ENCODE measurements at regions of chr18 and their contacts with region 1.

Region 1: DNA sequence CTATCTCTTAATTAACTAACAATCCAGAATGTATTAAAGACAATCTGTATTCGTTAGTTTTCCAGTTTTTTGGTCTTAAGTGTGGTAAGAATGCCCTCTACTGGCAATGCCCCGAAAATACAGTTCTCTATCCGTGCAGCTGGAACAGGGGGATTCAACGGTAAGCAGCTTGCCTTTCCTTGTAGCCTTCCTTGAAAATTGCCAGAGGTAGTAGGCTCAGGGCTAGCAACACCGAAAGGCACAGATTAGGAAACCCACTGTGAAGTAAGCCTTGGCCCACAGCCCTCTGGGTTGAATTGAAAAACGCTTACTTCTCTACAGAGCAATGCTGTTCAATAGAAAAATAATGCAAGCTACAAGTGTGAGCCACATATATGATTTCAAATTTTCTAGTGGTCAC is 17.1 kb upstream of the VPS4B start:
- DNase-seq: peak; percentile 76
- H3K4me3 ChIP-seq: peak overlapping the region in 1 of 2 experiments; percentile 28; a peak in 1 of 4 replicates
- H3K27ac ChIP-seq: no peak overlapping the region
- H3K4me1 ChIP-seq: 0 out of 4 replicates have a peak, but pooled peaks cover 0 to 6% of the 10 kb centered on the region in 2 experiments
- H3K27me3 ChIP-seq: no peaks in the 10 kb centered on the region
- CTCF ChIP-seq: peak; percentile 91
- EP300 ChIP-seq: no peak
- RAD21 ChIP-seq: peak; percentile 89

Region 2: DNA sequence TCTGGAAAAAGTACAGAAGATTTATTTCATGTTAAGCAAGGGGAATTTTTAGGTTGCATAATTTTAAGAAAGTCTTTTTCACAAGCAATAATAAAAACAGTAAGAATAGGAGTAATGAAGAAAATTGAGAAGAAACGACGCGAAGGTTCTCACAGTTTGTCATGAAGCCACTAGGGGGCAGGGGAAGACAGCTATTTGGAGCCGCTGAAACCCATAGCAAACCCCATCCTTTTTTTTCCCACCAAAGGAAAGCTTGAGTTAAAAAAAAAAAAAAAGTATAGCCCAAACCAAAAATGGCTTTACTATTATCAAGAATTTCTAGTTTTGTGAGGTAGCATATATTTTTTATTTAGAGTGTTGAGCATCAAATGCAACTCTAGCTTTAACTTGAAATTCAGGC is 423.1 kb before region 1 on chr18:
- CTCF ChIA-PET with region 1: interaction called, 66 read pairs
- POLR2A ChIA-PET with region 1: no interaction called
- DNase-seq: peak; percentile 82
- H3K4me3 ChIP-seq: peak overlapping the region in 1 of 2 experiments; percentile 4; a peak in 1 of 4 replicates
- H3K27ac ChIP-seq: no peak overlapping the region
- H3K4me1 ChIP-seq: no peaks in the 10 kb centered on the region
- H3K27me3 ChIP-seq: peaks cover 4% of the 10 kb centered on the region; the same call in 1 of the 2 replicates
- CTCF ChIP-seq: peak; percentile 91
- EP300 ChIP-seq: no peak
- RAD21 ChIP-seq: peak; percentile 97

Region 3: DNA sequence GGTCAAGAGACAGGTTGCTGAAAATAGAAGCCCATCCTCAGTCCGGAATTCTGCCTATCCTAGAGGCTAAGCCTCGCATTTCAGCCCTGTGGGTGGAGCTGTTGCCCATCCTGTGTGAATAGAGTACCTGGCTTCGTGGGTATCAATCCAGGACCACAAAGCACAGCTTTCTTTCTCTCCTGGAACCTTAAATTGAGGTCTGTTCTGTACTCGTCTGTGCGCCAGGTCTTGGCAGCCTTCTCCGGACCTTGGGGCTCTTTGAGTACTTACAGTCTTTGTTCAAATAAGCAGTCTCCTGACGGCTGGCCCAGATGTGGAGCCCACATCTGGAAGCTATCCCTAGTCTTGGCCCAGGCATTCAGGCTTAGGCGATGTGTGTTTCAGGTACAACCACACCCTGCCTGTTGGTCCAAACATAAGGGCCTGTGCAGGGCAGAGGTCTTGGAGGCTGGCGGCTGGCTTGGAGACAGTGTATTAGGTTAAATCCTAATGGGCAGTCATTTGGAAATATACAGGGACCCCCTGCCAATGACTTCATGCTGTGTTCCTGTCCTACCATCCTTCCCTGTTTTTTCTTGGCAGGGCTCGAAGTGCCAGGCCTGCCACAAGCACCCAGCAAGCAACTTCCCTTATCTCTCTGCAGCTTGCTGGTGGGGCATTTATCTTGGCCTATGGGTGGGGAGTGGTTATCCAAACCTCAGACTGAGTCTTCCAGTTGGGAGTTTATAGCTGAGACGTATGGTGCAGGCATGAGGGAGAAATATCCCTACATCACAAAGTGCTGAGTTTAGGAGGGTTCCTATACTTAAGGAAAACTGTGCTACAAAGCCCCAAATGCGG is 413.9 kb before region 1 on chr18:
- CTCF ChIA-PET with region 1: interaction called, 11 read pairs
- POLR2A ChIA-PET with region 1: no interaction called
- DNase-seq: peak; percentile 68
- H3K4me3 ChIP-seq: no peak overlapping the region
- H3K27ac ChIP-seq: peak overlapping the region in 1 of 2 experiments; percentile 6; a peak in 2 of 4 replicates
- H3K4me1 ChIP-seq: peaks cover 0 to 7% of the 10 kb centered on the region in 2 experiments; a peak in 1 of 4 replicates
- H3K27me3 ChIP-seq: no peaks in the 10 kb centered on the region
- CTCF ChIP-seq: peak; percentile 34
- EP300 ChIP-seq: no peak
- RAD21 ChIP-seq: peak; percentile 78

Region 4: DNA sequence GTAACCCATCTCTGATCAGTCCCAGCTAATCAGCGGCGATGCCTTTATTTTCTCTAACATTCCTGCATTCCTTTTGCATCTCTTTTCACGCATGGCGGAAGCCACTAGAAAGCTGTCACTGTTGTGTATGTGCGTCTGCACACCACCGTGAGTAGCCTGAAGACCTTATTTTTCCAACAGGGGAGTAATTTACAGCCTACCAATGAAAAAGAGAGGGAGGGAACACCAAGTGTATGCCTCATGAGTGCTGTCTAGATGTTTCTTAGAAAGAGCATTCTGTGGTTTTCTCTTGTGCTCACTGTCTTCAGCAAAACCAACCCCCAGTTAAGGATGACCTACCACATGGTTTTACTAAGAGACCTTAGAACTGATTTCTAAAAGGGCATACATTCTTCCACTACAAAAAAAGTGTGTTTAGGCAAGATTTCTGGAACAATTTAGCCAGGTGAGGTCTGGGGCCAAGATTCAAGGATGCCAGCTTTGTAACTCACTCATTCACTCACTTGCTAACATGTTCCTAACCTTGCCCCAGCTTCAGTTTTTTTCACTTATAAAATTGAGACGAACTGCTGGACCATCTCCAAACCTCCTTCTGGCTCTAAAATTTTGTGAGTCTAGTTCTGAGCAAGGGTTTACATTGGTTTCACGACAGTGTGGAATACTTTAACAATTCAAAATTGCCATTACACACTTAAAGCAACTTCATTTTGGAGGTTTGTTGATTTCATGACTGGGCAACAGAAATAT is 171.2 kb before region 1 on chr18:
- CTCF ChIA-PET with region 1: no interaction called
- POLR2A ChIA-PET with region 1: no interaction called
- DNase-seq: no peak
- H3K4me3 ChIP-seq: no peak overlapping the region
- H3K27ac ChIP-seq: no peak overlapping the region
- H3K4me1 ChIP-seq: peaks cover 0 to 27% of the 10 kb centered on the region in 2 experiments; a peak in 2 of 4 replicates
- H3K27me3 ChIP-seq: no peaks in the 10 kb centered on the region
- CTCF ChIP-seq: no peak
- EP300 ChIP-seq: no peak
- RAD21 ChIP-seq: no peak

Region 5: DNA sequence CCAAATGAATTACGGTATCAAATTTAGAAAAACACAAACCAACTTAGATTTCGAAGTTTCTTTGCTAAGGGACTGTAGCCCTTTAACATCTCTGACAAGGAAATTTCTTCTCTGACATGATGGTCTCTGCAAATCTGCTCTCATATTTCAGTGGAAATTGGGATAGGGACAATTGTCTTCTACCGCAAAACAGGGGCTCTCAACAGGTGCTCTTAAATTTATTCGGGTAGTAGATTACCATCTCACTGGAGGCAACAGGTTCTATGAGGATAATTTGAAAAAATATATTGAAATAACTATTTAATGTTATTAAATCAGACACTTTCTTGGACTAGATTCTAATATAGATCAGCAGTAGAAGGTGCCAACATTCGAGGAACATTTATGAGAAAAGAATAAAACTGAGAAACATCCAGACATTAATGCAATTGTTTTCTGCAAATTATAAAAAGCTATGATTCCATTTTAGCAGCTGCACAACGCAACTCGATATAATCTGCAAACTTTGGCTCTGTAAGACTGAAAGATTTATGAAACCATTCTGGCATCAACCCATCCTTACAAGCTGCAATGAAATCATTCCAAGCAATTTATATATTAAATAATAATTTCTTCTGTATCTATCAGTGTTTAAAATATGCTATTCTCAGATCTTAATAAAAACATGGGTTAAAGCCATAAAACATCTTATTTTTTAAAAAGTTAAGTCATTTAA is 109.7 kb before region 1 on chr18:
- CTCF ChIA-PET with region 1: interaction called, 12 read pairs
- POLR2A ChIA-PET with region 1: no interaction called
- DNase-seq: no peak
- H3K4me3 ChIP-seq: no peak overlapping the region
- H3K27ac ChIP-seq: no peak overlapping the region
- H3K4me1 ChIP-seq: no peaks in the 10 kb centered on the region
- H3K27me3 ChIP-seq: no peaks in the 10 kb centered on the region
- CTCF ChIP-seq: no peak
- EP300 ChIP-seq: no peak
- RAD21 ChIP-seq: no peak

Region 6: GRCh38 chr18:63339920-63340484 is 99.3 kb before region 1 on chr18:
- CTCF ChIA-PET with region 1: interaction called, 33 read pairs
- POLR2A ChIA-PET with region 1: no interaction called
- DNase-seq: peak; percentile 49
- H3K4me3 ChIP-seq: no peak overlapping the region
- H3K27ac ChIP-seq: no peak overlapping the region
- H3K4me1 ChIP-seq: no peaks in the 10 kb centered on the region
- H3K27me3 ChIP-seq: no peaks in the 10 kb centered on the region
- CTCF ChIP-seq: peak; percentile 79
- EP300 ChIP-seq: no peak
- RAD21 ChIP-seq: peak; percentile 67

Region 7: GRCh38 chr18:63427558-63427957 is 11.8 kb before region 1 on chr18:
- CTCF ChIA-PET with region 1: interaction called, 15 read pairs
- POLR2A ChIA-PET with region 1: interaction called, 6 read pairs
- DNase-seq: no peak
- H3K4me3 ChIP-seq: no peak overlapping the region
- H3K27ac ChIP-seq: no peak overlapping the region
- H3K4me1 ChIP-seq: no peaks in the 10 kb centered on the region
- H3K27me3 ChIP-seq: no peaks in the 10 kb centered on the region
- CTCF ChIP-seq: no peak
- EP300 ChIP-seq: no peak
- RAD21 ChIP-seq: no peak

Region 8: GRCh38 chr18:63454497-63454896 is 15.2 kb after region 1 on chr18:
- CTCF ChIA-PET with region 1: interaction called, 16 read pairs
- POLR2A ChIA-PET with region 1: no interaction called
- DNase-seq: no peak
- H3K4me3 ChIP-seq: no peak overlapping the region
- H3K27ac ChIP-seq: no peak overlapping the region
- H3K4me1 ChIP-seq: no peaks in the 10 kb centered on the region
- H3K27me3 ChIP-seq: no peaks in the 10 kb centered on the region
- CTCF ChIP-seq: no peak
- EP300 ChIP-seq: no peak
- RAD21 ChIP-seq: no peak

Region 9: GRCh38 chr18:63487676-63488075 is 48.3 kb after region 1 on chr18:
- CTCF ChIA-PET with region 1: no interaction called
- POLR2A ChIA-PET with region 1: no interaction called
- DNase-seq: no peak
- H3K4me3 ChIP-seq: no peak overlapping the region
- H3K27ac ChIP-seq: no peak overlapping the region
- H3K4me1 ChIP-seq: no peaks in the 10 kb centered on the region
- H3K27me3 ChIP-seq: peaks cover 18% of the 10 kb centered on the region; the same call in 1 of the 2 replicates
- CTCF ChIP-seq: no peak
- EP300 ChIP-seq: no peak
- RAD21 ChIP-seq: no peak

Region 10: GRCh38 chr18:63553117-63553516 is 113.8 kb after region 1 on chr18:
- CTCF ChIA-PET with region 1: no interaction called
- POLR2A ChIA-PET with region 1: no interaction called
- DNase-seq: no peak
- H3K4me3 ChIP-seq: no peak overlapping the region
- H3K27ac ChIP-seq: no peak overlapping the region; a peak in 1 of 4 replicates
- H3K4me1 ChIP-seq: peaks cover 0 to 4% of the 10 kb centered on the region in 2 experiments; a peak in 1 of 4 replicates
- H3K27me3 ChIP-seq: no peaks in the 10 kb centered on the region
- CTCF ChIP-seq: no peak
- EP300 ChIP-seq: no peak
- RAD21 ChIP-seq: no peak

Region 11: GRCh38 chr18:64002581-64002980 is 563.2 kb after region 1 on chr18:
- CTCF ChIA-PET with region 1: no interaction called
- POLR2A ChIA-PET with region 1: no interaction called
- DNase-seq: no peak
- H3K4me3 ChIP-seq: no peak overlapping the region
- H3K27ac ChIP-seq: no peak overlapping the region
- H3K4me1 ChIP-seq: no peaks in the 10 kb centered on the region
- H3K27me3 ChIP-seq: no peaks in the 10 kb centered on the region
- CTCF ChIP-seq: no peak
- EP300 ChIP-seq: no peak
- RAD21 ChIP-seq: no peak

Measured in SK-N-SH (cell line).